Ovary (tissue), 10 donors: ENCODE measurements at regions of chr6 and their contacts with region 1.

Region 1: GRCh38 chr6:169420912-169421543 is 167.4 kb upstream of the THBS2 start:
- DNase-seq: no peak
- H3K4me3 ChIP-seq: no peak overlapping the region
- H3K27ac ChIP-seq: no peak overlapping the region
- H3K4me1 ChIP-seq: no peaks in the 10 kb centered on the region
- H3K27me3 ChIP-seq: no peaks in the 10 kb centered on the region
- CTCF ChIP-seq: peak in 1 of 3 donors; percentile 12
- EP300 ChIP-seq: no peak
- POLR2A ChIP-seq: no peak

Region 2: GRCh38 chr6:169253337-169254238 is 167.4 kb before region 1 on chr6 and contains the start of gene THBS2:
- intact Hi-C with region 1: loop called in 1 of 4 experiments (anchors 10 kb)
- DNase-seq: peak; percentile 77 to 83 (median 80)
- H3K4me3 ChIP-seq: peak within 1 kb of the TSS; percentile 47
- H3K27ac ChIP-seq: peak within 1 kb of the TSS in 1 of 2 donors; percentile 59
- H3K4me1 ChIP-seq: peaks cover 9% of the 10 kb centered on the region
- H3K27me3 ChIP-seq: no peaks in the 10 kb centered on the region
- CTCF ChIP-seq: no peak
- EP300 ChIP-seq: no peak
- POLR2A ChIP-seq: peak; percentile 78
- total RNA-seq, gene THBS2: 38.0 to 151 (median 72.8) TPM